Posterior cingulate gyrus (tissue), 11 donors: ENCODE measurements at regions of chr14 and their contacts with region 1.

Region 1: DNA sequence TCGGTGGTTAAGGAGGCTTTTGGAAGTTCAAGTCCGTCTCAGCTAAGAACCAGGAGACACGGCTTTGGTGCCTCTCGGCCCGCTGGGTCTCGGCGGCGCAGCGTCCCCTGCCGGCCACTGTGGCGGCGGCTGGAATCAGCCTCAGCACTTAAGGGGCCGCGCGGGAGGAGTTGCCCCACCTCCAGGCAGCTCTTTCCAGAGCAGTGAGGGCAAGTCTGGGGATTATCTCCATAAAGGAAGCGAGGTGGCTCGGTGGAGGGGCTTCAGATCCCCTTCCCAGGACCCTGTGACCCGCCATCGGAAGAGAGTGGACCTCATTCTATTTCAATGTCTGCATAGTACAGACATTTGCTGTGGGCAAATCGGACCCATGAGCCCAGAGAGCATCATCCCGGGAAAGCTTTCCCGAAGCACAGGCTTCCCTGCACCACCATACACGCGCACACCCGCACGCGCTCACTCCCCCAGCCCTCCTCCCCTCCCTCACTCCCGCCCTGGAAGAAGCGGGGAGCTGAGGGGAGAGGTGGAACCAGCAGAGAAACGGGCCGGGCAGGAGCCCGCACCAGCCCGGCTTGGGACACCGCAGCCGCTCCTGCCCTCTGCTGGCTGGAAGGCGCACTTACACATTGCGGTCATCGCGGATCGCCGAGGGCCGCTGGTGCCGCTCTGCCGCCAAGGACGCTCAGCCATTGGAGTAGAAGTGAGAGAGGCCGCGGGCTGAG is 15.9 kb downstream of the RNASE2 start:
- DNase-seq: peak; percentile 65 to 97 (median 84)

Region 2: DNA sequence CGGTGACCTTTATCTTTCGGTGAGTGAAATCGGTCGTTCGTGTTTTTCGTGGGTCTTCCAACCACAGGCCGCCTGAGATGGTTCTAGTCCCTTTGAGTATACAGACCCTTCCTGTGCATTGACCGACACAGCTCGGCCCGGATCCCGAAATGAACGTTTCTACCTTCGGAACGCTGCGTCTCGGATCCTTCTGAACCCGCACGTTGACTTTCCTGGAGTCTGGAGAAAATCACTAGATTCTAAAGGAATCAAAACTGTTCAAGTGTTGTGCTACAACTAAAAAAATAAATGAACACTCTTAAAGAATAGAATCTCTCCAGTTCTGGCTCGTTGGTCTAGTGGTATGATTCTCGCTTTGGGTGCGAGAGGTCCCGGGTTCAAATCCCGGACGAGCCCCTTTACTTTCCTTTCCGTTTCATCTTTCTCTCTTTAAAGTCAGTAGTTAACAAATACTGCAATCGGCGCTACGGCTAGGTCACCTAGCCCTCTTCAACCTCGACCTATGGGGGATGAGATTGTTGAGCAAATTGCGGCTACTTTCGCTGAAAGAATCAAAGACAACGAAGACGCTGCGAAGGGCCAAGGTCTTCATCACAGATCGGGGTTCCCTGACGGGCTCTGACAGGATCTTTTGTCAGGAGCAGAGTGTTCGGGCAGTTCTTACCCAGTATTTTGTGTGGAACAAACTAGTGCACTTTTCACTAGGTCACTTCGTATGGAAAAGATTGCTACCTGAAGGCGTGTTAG is 338.3 kb before region 1 on chr14:
- intact Hi-C with region 1: loop called (anchors 10 kb)
- DNase-seq: peak in 3 of 10 donors; percentile 27 to 85 (median 39)

Region 3: GRCh38 chr14:20697273-20698017 is 273.7 kb before region 1 on chr14:
- intact Hi-C with region 1: loop called (anchors 5 kb)
- DNase-seq: peak in 7 of 10 donors; percentile 66 to 95 (median 77)

Region 4: GRCh38 chr14:20818861-20819260 is 152.3 kb before region 1 on chr14:
- intact Hi-C with region 1: no loop called
- DNase-seq: peak in 1 of 10 donors; percentile 83

Region 5: DNA sequence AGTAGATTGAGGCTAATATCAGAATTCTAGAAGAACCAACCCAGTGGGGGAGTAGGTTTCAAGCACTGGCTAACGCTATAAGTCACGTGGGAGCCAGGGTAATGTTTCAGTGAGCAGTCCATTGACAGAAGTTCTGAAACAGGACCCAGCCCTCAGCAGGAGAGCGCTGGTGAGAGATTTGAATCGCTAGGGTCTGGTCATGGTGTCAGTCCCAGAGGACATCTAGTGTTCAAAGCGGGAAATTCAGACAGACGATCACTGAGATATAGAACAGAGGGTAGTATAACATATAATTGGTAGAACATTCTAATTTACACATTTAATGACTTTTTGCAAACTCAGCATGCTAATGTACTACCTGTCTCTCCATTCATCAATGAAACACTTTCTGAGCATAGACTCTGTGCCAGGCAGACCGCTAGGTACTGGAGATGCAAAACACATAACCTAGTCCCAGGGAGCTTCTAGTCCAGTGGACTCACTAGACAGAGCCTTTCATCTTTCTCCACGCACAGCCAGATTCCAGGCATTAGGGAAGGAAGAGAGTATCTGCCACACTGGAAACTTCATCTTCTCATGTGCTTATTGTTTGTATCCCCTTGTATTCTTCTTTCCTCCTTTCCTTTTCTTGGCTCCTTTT is 115.4 kb before region 1 on chr14:
- intact Hi-C with region 1: loop called (anchors 2 kb)
- DNase-seq: peak in 7 of 10 donors; percentile 32 to 91 (median 51)

Region 6: DNA sequence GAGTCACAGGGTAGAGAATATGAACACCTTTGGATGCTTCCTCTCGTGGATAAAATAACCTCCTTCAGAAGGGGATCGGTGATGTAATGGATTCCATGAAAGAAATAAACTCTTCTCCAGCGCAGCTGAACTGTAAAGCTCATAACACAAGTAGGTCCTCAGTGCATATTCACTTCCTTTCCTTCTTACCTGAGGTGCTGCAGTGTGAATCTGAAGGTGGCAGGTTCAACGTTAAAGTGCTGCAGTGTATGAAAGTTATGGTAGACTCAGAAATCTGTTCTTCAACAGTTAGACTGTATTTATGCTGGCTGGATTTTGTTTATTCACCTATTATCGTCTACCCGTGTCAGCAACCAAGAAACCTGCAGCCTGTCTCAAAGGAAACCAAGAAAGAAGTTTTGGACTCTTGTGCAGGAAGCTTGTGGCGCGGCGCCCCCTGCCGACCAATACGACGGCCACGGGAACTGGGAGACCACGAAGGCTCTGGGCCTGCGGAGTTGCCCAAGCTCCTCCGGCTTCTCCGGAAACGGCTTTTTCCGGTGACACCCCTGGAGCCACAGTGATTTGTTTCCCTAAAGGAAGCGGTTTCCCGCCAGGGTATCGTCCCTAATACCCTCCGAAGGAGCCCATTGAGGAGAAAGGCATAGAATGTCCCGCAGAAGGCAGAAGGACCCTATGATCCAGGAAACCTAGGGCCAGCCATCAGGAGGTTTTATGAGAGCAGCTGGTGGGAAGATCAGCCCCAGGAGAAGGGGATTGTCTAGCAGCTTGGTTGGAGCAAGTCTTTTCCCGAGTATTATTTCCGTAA is 97.6 kb before region 1 on chr14:
- intact Hi-C with region 1: loop called (anchors 5 kb)
- DNase-seq: peak; percentile 47 to 96 (median 80)

Region 7: GRCh38 chr14:20934148-20934762 is 36.9 kb before region 1 on chr14:
- intact Hi-C with region 1: no loop called
- DNase-seq: peak in 3 of 10 donors; percentile 22 to 78 (median 71)

Region 8: GRCh38 chr14:21039585-21040369 is 68.6 kb after region 1 on chr14:
- intact Hi-C with region 1: loop called (anchors 5 kb)
- DNase-seq: peak in 3 of 10 donors; percentile 28 to 86 (median 65)